ENCODE measurements at regions of chr2 and their contacts with region 1.

Region 1: GRCh38 chr2:23926750-23927571 is at the start of gene ATAD2B:
- DNase-seq: peak; percentile 94
- H3K4me3 ChIP-seq: peak within 1 kb of the TSS; percentile 70 to 86 (median 75)
- H3K27ac ChIP-seq: peak within 1 kb of the TSS; percentile 95 to 99 (median 98)
- H3K4me1 ChIP-seq: peaks cover 16 to 39% (median 20%) of the 10 kb centered on the region in 4 donors
- H3K27me3 ChIP-seq: no peaks in the 10 kb centered on the region
- CTCF ChIP-seq: peak; percentile 40 to 94 (median 80)
- EP300 ChIP-seq: no peak
- POLR2A ChIP-seq: peak; percentile 92
- total RNA-seq, gene ATAD2B: 37.1 to 82.7 (median 40.7) TPM

Region 2: DNA sequence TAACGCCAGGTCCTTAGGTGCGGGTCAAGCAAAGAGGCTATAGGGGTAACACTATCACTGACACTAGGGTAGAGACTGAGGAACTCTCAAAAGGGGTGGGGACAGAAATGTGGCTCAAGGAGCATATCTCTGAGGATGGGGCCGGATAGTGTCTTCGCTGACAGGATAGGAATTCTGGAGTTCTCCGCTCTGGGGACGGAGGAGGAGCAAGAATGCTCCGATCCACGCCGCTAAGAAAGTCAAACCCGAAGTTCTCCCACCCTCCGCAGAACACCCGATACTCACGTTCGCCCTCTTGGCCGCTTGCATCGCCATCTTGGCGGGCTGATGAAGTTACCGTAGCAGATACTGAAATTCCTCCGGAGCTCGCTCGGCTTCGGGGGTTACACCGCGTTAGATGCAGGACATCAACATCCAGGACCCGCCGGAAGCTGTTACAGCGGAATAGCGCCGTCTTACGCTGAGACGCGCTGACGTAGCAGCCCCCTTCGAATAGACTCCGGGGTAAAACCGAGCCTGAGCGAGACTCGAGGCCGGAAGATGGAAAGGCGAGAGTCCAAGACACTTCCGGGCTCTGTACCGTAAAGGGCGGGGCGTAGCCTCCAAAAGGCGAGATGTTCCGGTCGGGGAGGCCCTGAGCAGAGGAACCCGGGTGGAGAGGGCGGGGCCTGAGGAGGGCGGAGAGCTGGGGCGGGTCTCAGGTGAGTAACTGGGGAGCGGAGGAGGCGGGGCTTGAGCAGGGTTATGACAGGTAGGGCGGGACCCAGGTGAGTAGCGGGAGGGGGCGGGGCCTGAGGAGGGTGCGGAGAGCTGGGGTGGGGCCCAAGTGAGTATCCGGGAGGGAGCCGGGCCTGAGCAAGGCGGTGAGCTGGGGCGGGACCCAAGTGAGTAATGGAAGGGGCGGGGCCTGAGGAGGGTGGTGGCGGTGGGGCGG is 149.2 kb after region 1 on chr2 and contains the start of gene SF3B6:
- in situ Hi-C with region 1: loop called in 1 of 4 experiments (anchors 10 kb)
- intact Hi-C with region 1: no loop called
- DNase-seq: peak; percentile 100
- H3K4me3 ChIP-seq: peak within 1 kb of the TSS; percentile 55 to 66 (median 60)
- H3K27ac ChIP-seq: peak within 1 kb of the TSS; percentile 90 to 97 (median 93)
- H3K4me1 ChIP-seq: peaks cover 9 to 30% (median 16%) of the 10 kb centered on the region in 4 donors
- H3K27me3 ChIP-seq: no peaks in the 10 kb centered on the region
- CTCF ChIP-seq: no peak
- EP300 ChIP-seq: no peak
- POLR2A ChIP-seq: peak; percentile 76
- total RNA-seq, gene SF3B6: 17.3 to 104 (median 93.2) TPM

Region 3: GRCh38 chr2:24084386-24085361 is 157.7 kb after region 1 on chr2 and contains the start of gene TP53I3:
- in situ Hi-C with region 1: loop called in 1 of 4 experiments (anchors 10 kb)
- intact Hi-C with region 1: loop called (anchors 1 kb)
- DNase-seq: peak; percentile 91
- H3K4me3 ChIP-seq: peak within 1 kb of the TSS; percentile 42 to 63 (median 53)
- H3K27ac ChIP-seq: peak within 1 kb of the TSS; percentile 92 to 96 (median 93)
- H3K4me1 ChIP-seq: peaks cover 8 to 27% (median 15%) of the 10 kb centered on the region in 4 donors
- H3K27me3 ChIP-seq: no peaks in the 10 kb centered on the region
- CTCF ChIP-seq: peak; percentile 96 to 100 (median 98)
- EP300 ChIP-seq: no peak
- POLR2A ChIP-seq: peak; percentile 93
- total RNA-seq, gene TP53I3: 83.2 to 257 (median 128) TPM

Region 4: GRCh38 chr2:25548601-25549000 is 1621.6 kb after region 1 on chr2:
- in situ Hi-C with region 1: no loop called
- intact Hi-C with region 1: no loop called
- DNase-seq: no peak
- H3K4me3 ChIP-seq: no peak overlapping the region
- H3K27ac ChIP-seq: no peak overlapping the region
- H3K4me1 ChIP-seq: no peaks in the 10 kb centered on the region
- H3K27me3 ChIP-seq: no peaks in the 10 kb centered on the region
- CTCF ChIP-seq: no peak
- EP300 ChIP-seq: no peak
- POLR2A ChIP-seq: no peak

Measured in transverse colon (tissue), 4 donors.